Activated naive CD4-positive, alpha-beta T cell treated with anti-CD3 and anti-CD28 coated beads, Interleukin-2, amount 10 ng/mL, durations not matched to agents 7 days and 5 days (primary cell): ENCODE measurements at regions of chr5 and their contacts with region 1.

Region 1: DNA sequence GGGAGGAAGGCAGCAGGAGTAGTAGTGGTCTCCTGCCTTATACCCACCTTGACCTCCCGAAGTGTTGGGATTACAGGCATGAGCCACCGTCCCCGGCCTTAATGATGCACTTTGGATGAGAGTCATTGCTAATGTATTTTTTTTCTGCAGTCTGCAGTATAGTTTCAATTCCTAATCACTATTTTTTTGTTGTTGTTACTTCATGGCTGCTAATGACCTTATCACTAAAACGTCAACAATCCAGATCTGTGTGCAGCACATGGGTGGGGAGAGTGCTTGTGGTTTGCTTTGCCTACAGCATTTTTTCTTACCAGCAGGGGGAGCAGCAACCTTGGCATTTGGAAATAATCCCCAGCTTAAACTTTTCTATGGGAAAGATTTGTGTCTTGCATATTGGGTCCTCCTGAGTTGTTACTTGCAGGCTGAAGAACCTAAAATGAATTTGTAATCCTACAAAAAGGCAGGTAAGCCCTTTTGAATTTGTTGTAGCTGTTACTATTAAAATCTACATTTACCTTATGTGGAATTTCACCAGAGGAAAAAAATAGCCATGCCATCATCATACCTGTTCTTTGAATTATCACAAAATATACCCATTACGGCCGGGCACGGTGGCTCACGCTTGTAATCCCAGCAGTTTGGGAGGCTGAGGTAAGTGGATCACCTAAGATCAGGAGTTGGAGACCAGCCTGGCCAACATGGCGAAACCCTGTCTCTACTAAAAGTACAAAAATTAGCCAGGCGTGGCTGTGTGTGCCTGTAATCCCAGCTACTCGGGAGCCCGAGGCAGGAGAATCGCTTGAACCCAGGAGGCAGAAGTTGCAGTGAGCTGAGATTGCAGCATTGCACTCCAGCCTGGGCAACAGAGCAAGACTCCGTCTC is 6.3 kb upstream of the MED7 start:
- DNase-seq: peak; percentile 89
- H3K4me3 Mint-ChIP-seq: no peak overlapping the region
- H3K27ac Mint-ChIP-seq: peak overlapping the region; percentile 56
- H3K4me1 Mint-ChIP-seq: peaks cover 63% of the 10 kb centered on the region
- H3K27me3 Mint-ChIP-seq: no peaks in the 10 kb centered on the region

Region 2: GRCh38 chr5:157116483-157116954 is 32.5 kb before region 1 on chr5:
- CTCF ChIA-PET with region 1: no interaction called
- DNase-seq: no peak
- H3K4me3 Mint-ChIP-seq: no peak overlapping the region
- H3K27ac Mint-ChIP-seq: no peak overlapping the region
- H3K4me1 Mint-ChIP-seq: peaks cover 40% of the 10 kb centered on the region
- H3K27me3 Mint-ChIP-seq: no peaks in the 10 kb centered on the region

Region 3: DNA sequence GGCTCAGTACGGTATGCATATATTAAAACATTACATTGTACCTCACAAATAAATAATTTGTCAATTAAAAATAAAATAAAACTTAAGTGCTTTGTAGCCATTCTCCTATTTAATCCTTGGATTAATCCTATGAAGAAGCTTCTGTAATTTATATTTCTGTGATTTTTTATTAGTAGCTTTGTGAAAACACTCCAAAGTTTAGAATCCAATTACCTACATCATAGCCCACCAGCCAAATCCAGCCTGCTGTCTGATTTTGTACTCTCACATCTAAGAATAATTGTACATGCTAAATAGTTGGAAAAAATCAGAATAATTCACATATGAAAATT is 16.7 kb before region 1 on chr5:
- CTCF ChIA-PET with region 1: no interaction called
- DNase-seq: no peak
- H3K4me3 Mint-ChIP-seq: no peak overlapping the region
- H3K27ac Mint-ChIP-seq: no peak overlapping the region
- H3K4me1 Mint-ChIP-seq: peaks cover 42% of the 10 kb centered on the region
- H3K27me3 Mint-ChIP-seq: no peaks in the 10 kb centered on the region

Region 4: DNA sequence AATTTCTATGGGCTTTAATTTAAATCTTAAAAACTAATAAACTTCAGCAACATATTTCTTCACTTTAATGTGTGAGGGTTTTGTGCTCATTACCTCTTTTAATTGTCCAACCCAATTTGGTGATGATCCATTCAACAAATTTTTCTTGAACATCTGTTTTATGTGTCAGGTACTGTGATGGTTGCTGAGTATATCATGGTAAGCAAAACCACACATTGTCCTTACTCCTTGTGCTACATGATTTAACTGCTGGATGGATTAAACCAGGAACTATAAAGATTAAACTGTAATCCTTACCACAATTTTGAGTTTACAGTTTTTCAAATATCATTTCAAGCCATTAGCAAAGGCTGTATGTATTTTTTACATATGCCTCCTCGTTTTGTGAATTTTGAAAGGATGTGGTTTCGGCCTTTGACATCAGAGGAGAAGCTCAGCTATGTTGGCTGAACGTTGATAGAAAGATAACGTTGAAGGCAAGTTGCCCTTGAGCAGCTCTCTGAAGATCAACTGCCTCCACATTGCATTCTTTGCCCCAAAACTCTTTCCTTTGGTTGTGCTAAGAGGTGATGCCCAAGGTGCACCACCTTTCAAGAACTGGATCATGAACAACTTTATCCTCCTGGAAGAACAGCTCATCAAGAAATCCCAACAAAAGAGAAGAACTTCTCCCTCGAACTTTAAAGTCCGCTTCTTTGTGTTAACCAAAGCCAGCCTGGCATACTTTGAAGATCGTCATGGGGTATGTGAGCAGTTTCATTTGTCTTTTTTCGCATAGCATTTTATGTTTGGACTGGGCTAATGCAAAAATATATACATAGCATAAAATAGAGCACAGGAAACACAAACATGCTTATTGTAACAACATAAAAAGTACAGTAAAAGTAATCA is 31.6 kb after region 1 on chr5 and contains the start of gene ITK:
- CTCF ChIA-PET with region 1: interaction called, 37 read pairs
- DNase-seq: peak; percentile 64
- H3K4me3 Mint-ChIP-seq: peak within 1 kb of the TSS; percentile 90
- H3K27ac Mint-ChIP-seq: peak within 1 kb of the TSS; percentile 97
- H3K4me1 Mint-ChIP-seq: peaks cover 44% of the 10 kb centered on the region
- H3K27me3 Mint-ChIP-seq: no peaks in the 10 kb centered on the region

Region 5: GRCh38 chr5:157219491-157220271 is 70.7 kb after region 1 on chr5:
- CTCF ChIA-PET with region 1: interaction called, 36 read pairs
- DNase-seq: peak; percentile 39
- H3K4me3 Mint-ChIP-seq: peak overlapping the region; percentile 56
- H3K27ac Mint-ChIP-seq: peak overlapping the region; percentile 94
- H3K4me1 Mint-ChIP-seq: peaks cover 95% of the 10 kb centered on the region
- H3K27me3 Mint-ChIP-seq: no peaks in the 10 kb centered on the region

Region 6: DNA sequence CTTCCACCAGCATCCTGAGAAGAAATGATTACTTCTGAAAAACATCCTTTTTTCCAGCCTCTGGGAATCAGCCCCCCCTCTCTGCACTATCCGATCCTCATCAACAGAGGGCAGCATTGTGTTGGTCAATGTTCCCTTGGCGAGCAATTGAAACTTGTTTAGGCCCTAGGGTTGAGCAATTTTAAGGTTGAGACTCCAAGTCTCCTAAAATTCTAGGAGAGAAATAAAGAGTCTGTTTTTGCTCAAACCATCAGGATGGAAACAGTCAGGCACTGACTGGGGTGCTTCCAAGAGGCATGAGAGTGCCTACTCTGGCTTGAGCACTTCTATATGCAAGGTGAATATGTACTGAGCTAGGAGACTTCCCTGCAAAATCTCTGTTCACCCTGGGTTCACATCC is 104.6 kb after region 1 on chr5:
- CTCF ChIA-PET with region 1: interaction called, 26 read pairs
- DNase-seq: no peak
- H3K4me3 Mint-ChIP-seq: peak overlapping the region; percentile 16
- H3K27ac Mint-ChIP-seq: peak overlapping the region; percentile 95
- H3K4me1 Mint-ChIP-seq: peaks cover 97% of the 10 kb centered on the region
- H3K27me3 Mint-ChIP-seq: no peaks in the 10 kb centered on the region

Region 7: GRCh38 chr5:157312492-157312891 is 163.5 kb after region 1 on chr5:
- CTCF ChIA-PET with region 1: interaction called, 16 read pairs
- DNase-seq: peak; percentile 71
- H3K4me3 Mint-ChIP-seq: peak overlapping the region; percentile 2
- H3K27ac Mint-ChIP-seq: peak overlapping the region; percentile 19
- H3K4me1 Mint-ChIP-seq: peaks cover 39% of the 10 kb centered on the region
- H3K27me3 Mint-ChIP-seq: no peaks in the 10 kb centered on the region